HepG2 (cell line): ENCODE measurements at regions of chr18 and their contacts with region 1.

Region 1: GRCh38 chr18:50518788-50519546 is 40.9 kb upstream of the MAPK4 start:
- DNase-seq: no peak
- ATAC-seq: no peak
- H3K4me3 ChIP-seq: no peak overlapping the region
- H3K27ac ChIP-seq: no peak overlapping the region
- H3K4me1 ChIP-seq: no peaks in the 10 kb centered on the region
- H3K27me3 ChIP-seq: 0 out of 5 replicates have a peak, but pooled peaks cover 0 to 7% of the 10 kb centered on the region in 2 experiments
- CTCF ChIP-seq: no peak
- EP300 ChIP-seq: no peak
- POLR2A ChIP-seq: no peak
- RAD21 ChIP-seq: no peak

Region 2: GRCh38 chr18:50644810-50645209 is 125.8 kb after region 1 on chr18:
- CTCF ChIA-PET with region 1: no interaction called
- POLR2A ChIA-PET with region 1: no interaction called
- in situ Hi-C with region 1: loop called (anchors 5 kb)
- intact Hi-C with region 1: no loop called
- DNase-seq: peak; percentile 33
- ATAC-seq: peak; percentile 99
- H3K4me3 ChIP-seq: no peak overlapping the region
- H3K27ac ChIP-seq: no peak overlapping the region
- H3K4me1 ChIP-seq: no peaks in the 10 kb centered on the region
- H3K27me3 ChIP-seq: no peaks in the 10 kb centered on the region
- CTCF ChIP-seq: peak; percentile 72
- EP300 ChIP-seq: no peak
- POLR2A ChIP-seq: no peak
- RAD21 ChIP-seq: no peak

Region 3: GRCh38 chr18:50707855-50708469 is 189.0 kb after region 1 on chr18:
- CTCF ChIA-PET with region 1: no interaction called
- POLR2A ChIA-PET with region 1: no interaction called
- in situ Hi-C with region 1: no loop called
- intact Hi-C with region 1: no loop called
- DNase-seq: no peak
- ATAC-seq: no peak
- H3K4me3 ChIP-seq: no peak overlapping the region
- H3K27ac ChIP-seq: no peak overlapping the region
- H3K4me1 ChIP-seq: no peaks in the 10 kb centered on the region
- H3K27me3 ChIP-seq: no peaks in the 10 kb centered on the region; a peak in 2 of 5 replicates
- CTCF ChIP-seq: no peak
- EP300 ChIP-seq: no peak
- POLR2A ChIP-seq: no peak
- RAD21 ChIP-seq: no peak

Region 4: DNA sequence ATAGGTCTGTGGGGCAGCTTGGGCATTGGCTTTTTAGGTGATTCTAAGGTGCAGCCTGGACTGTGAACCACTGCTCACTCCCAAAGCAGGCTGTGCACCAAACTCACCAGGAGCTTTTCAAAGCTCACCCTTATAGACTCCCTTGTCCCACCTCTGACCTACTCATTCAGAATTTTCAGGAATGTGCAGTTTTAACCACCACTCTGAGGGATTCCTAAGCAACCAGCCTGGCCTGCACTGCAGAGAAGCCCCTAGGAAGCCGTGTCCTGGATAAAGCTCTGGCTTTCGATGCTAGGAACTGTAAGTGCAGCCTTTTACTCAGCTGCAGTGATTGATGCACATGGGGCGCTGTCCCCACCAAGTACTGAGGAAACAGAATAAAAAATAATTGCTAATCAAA is 267.9 kb after region 1 on chr18:
- CTCF ChIA-PET with region 1: no interaction called
- POLR2A ChIA-PET with region 1: no interaction called
- in situ Hi-C with region 1: loop called (anchors 10 kb)
- intact Hi-C with region 1: no loop called
- DNase-seq: no peak
- ATAC-seq: no peak
- H3K4me3 ChIP-seq: no peak overlapping the region
- H3K27ac ChIP-seq: no peak overlapping the region
- H3K4me1 ChIP-seq: no peaks in the 10 kb centered on the region
- H3K27me3 ChIP-seq: peaks cover 0 to 1% of the 10 kb centered on the region in 2 experiments; a peak in 1 of 5 replicates
- CTCF ChIP-seq: no peak
- EP300 ChIP-seq: no peak
- POLR2A ChIP-seq: no peak
- RAD21 ChIP-seq: no peak